OCI-LY7 (cell line): ENCODE measurements at regions of chr3 and their contacts with region 1.

Region 1: GRCh38 chr3:128969993-128970739 is 23.7 kb downstream of the CFAP92 start:
- DNase-seq: peak; percentile 73
- H3K4me3 ChIP-seq: no peak overlapping the region
- H3K27ac ChIP-seq: no peak overlapping the region
- H3K4me1 ChIP-seq: peaks cover 9% of the 10 kb centered on the region
- CTCF ChIP-seq: peak; percentile 100

Region 2: GRCh38 chr3:129016356-129016719 is 46.2 kb after region 1 on chr3:
- CTCF ChIA-PET with region 1: interaction called, 14 read pairs
- POLR2A ChIA-PET with region 1: interaction called, 8 read pairs
- intact Hi-C with region 1: loop called (anchors 1 kb)
- DNase-seq: peak; percentile 90
- H3K4me3 ChIP-seq: no peak overlapping the region
- H3K27ac ChIP-seq: peak overlapping the region; percentile 53
- H3K4me1 ChIP-seq: peaks cover 32% of the 10 kb centered on the region
- CTCF ChIP-seq: peak; percentile 64

Region 3: DNA sequence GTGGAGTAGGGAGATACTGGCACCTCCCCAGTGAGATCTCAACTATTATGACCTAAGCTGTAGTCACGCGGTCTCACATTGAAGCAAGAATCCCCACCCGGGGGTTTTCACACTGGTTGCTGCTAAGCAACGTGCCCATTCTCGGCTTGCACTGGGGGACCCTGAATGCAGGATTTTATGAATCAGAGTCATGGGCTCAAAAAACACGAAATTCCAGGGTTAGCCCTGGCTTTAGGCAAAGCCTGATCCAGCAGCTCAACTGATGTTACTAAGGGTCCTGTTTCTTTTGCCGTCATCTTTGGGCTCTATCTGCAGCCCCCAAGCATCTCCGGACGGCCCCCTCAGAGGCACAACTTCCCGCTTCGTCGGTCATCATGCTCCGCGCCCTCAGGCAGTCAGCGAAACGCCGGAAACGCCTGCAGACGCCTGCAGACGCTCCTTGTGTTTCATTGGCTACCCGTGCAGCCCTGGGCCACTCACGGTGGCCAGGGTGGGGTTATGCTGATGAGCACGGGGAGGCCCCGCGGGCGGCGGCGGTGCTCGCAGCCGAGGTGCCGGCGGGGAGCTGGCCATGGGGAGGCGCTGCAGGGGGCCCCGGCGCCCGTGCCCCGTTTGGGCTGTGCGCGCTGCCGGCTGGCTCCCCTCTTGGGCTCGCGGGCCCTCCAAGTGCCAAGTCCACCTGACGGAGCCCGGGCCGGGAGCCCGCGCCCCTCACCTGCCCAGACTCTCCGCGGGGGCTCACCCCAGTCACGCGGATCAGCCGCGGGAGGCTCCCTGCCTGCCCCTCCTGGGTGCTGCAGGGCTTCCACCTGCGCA is 56.8 kb after region 1 on chr3:
- CTCF ChIA-PET with region 1: no interaction called
- POLR2A ChIA-PET with region 1: interaction called, 4 read pairs
- intact Hi-C with region 1: loop called (anchors 2 kb)
- DNase-seq: peak; percentile 98
- H3K4me3 ChIP-seq: peak overlapping the region; percentile 66
- H3K27ac ChIP-seq: peak overlapping the region; percentile 44
- H3K4me1 ChIP-seq: peaks cover 38% of the 10 kb centered on the region
- CTCF ChIP-seq: peak; percentile 89

Region 4: GRCh38 chr3:129052675-129053074 is 82.5 kb after region 1 on chr3:
- CTCF ChIA-PET with region 1: interaction called, 4 read pairs
- POLR2A ChIA-PET with region 1: interaction called, 3 read pairs
- intact Hi-C with region 1: loop called (anchors 5 kb)
- DNase-seq: no peak
- H3K4me3 ChIP-seq: no peak overlapping the region
- H3K27ac ChIP-seq: no peak overlapping the region
- H3K4me1 ChIP-seq: peaks cover 9% of the 10 kb centered on the region
- CTCF ChIP-seq: no peak

Region 5: GRCh38 chr3:129106331-129106730 is 136.2 kb after region 1 on chr3:
- CTCF ChIA-PET with region 1: no interaction called
- POLR2A ChIA-PET with region 1: no interaction called
- intact Hi-C with region 1: loop called (anchors 5 kb)
- DNase-seq: no peak
- H3K4me3 ChIP-seq: no peak overlapping the region
- H3K27ac ChIP-seq: no peak overlapping the region
- H3K4me1 ChIP-seq: no peaks in the 10 kb centered on the region
- CTCF ChIP-seq: peak; percentile 31; the same call in 1 of the 2 replicates

Region 6: DNA sequence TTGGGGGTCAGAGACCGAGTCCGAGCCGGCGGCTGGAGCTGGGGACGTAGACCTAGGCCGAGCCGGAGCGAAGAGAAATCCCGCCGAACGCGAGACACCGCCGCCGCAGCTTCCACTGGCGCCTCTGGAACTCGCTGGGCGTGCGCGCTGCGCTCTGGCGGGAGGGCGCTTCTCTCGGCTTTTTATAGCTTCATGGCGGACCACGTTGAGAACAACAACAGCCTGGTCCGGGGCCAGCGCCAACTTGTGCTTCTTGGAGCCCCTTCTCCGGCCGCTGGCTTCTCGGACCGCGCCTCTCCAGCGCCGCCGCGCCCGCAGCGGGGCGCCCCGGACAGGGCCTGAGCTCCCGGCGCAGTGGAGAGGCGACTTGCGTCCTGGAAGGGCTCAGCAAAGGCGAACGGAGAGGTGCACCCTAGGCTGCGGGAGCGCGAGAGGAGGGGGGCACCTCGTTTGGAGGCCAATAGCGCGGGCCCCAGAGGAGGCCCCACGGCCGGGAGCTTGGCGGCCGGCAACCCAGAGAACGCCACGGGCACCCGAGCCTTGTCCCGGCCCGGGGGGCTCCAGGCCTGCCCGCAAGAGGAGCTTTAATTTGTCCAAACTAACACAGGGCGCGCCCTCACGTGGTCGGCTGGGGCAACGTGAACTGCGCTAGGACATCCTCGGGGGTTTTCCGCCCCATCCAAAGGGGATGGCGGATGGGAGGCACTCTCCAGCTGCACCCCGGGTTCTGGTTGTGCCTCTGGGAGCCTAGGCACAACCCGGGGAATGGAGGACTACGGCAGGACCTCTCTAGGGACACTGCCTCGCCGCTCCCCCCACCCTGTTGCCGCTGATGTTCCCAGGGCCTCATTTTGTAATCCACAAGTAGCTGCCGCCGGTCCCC is 346.2 kb after region 1 on chr3:
- CTCF ChIA-PET with region 1: interaction called, 3 read pairs
- POLR2A ChIA-PET with region 1: no interaction called
- intact Hi-C with region 1: loop called (anchors 10 kb)
- DNase-seq: peak; percentile 86
- H3K4me3 ChIP-seq: peak overlapping the region; percentile 89
- H3K27ac ChIP-seq: peak overlapping the region; percentile 73
- H3K4me1 ChIP-seq: peaks cover 40% of the 10 kb centered on the region
- CTCF ChIP-seq: peak; percentile 91